ENCODE measurements at regions of chr10 and their contacts with region 1.

Region 1: GRCh38 chr10:69515699-69516259 is 57.4 kb downstream of the NEUROG3 start:
- DNase-seq: peak in 1 of 2 donors; percentile 66
- ATAC-seq: peak; percentile 75 to 83 (median 83)
- H3K4me3 ChIP-seq: no peak overlapping the region
- H3K27ac ChIP-seq: no peak overlapping the region
- H3K4me1 ChIP-seq: no peaks in the 10 kb centered on the region
- H3K27me3 ChIP-seq: no peaks in the 10 kb centered on the region
- CTCF ChIP-seq: peak; percentile 58

Region 2: GRCh38 chr10:69629897-69630650 is 114.3 kb after region 1 on chr10 and contains the start of gene FAM241B:
- intact Hi-C with region 1: loop called in 1 of 2 experiments (anchors 2 kb)
- DNase-seq: peak; percentile 56 to 79
- ATAC-seq: peak; percentile 86 to 97 (median 94)
- H3K4me3 ChIP-seq: peak within 1 kb of the TSS; percentile 72
- H3K27ac ChIP-seq: no peak within 1 kb of the TSS
- H3K4me1 ChIP-seq: no peaks in the 10 kb centered on the region
- H3K27me3 ChIP-seq: peaks cover 0 to 17% (median 0%) of the 10 kb centered on the region in 3 donors
- CTCF ChIP-seq: peak; percentile 95
- total RNA-seq, gene FAM241B: 1.1 to 6.2 (median 1.7) TPM

Measured in psoas muscle (tissue), 8 donors.